ENCODE measurements at regions of chr19 and their contacts with region 1.

Region 1: GRCh38 chr19:45584332-45585157 is at the start of gene OPA3:
- DNase-seq: peak; percentile 98
- H3K4me3 Mint-ChIP-seq: peak within 1 kb of the TSS; percentile 95
- H3K27ac Mint-ChIP-seq: peak within 1 kb of the TSS; percentile 96
- H3K4me1 Mint-ChIP-seq: peaks cover 16% of the 10 kb centered on the region
- H3K27me3 Mint-ChIP-seq: no peaks in the 10 kb centered on the region
- total RNA-seq, gene OPA3: 12.1 and 16.2 TPM in 2 replicates

Region 2: DNA sequence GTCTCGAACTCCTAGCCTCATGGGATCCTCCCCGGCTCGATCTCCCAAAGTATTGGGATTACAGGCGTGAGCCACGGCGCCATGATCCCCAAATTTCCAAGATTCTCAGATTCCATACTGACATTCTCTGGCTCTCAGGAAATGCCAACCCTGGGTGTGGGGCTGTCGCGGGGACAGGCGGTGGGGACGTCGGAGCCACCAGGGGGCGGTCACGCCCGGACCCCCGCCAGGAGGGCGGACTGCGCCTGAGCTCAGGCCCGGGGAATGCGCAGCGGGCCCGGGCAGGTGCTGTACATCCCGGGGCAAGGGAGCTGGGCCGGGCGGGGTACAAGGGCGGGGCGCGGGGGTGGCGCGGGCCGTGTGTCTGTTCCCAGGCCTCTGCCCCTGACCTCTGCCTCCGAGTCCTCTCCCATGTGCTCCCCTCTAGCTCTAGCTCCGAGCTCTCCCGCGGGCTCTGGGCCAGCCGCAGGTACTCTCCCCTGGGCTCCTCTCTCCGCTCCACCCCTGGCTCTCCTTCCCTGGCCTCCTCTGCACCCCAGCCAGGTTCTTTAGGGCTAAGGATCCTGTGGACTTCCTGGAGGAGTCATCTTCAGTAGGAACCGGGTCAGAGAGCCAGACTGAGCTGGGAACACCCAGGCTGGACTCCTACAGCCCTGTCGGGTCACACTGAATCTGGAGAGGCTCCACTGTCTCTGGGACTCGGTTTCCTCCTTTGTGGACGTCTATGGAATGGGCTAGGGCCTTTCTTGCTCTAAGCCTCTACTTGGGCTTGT is 182.1 kb before region 1 on chr19:
- intact Hi-C with region 1: no loop called
- DNase-seq: no peak
- H3K4me3 Mint-ChIP-seq: no peak overlapping the region
- H3K27ac Mint-ChIP-seq: no peak overlapping the region
- H3K4me1 Mint-ChIP-seq: peaks cover 43% of the 10 kb centered on the region
- H3K27me3 Mint-ChIP-seq: peaks cover 22% of the 10 kb centered on the region

Region 3: DNA sequence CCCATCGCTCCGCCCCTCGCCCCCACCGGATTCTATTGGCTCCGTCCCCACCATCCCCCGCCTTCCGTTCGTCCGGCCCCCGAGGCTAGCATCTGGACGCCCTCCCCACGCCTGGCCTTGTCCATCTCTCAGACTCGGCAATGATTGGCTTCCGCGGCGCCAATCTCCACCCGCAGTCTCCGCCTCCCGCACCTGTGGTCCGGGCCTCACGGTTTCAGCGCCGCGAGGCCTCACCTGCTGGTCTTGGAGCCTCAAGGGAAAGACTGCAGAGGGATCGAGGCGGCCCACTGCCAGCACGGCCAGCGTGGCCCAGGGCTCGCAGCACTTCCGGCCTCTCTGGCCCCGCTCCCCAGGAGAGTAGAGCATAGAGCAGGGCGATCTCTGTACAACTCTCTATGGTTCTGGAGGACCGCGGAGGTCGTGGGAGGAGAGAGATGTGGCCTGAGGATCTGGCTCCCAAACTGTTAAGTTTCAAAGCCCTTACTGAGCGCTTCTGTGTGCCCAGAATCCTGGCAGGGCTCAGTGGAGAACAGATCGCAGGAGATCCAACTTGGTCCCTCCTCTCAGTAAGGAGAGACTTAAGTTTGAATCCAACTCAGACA is 160.9 kb before region 1 on chr19 and contains the start of gene ERCC1:
- intact Hi-C with region 1: loop called (anchors 2 kb)
- DNase-seq: peak; percentile 82
- H3K4me3 Mint-ChIP-seq: peak within 1 kb of the TSS; percentile 97
- H3K27ac Mint-ChIP-seq: peak within 1 kb of the TSS; percentile 95
- H3K4me1 Mint-ChIP-seq: peaks cover 50% of the 10 kb centered on the region
- H3K27me3 Mint-ChIP-seq: peaks cover 9% of the 10 kb centered on the region
- total RNA-seq, gene ERCC1: 143 and 152 TPM in 2 replicates

Region 4: DNA sequence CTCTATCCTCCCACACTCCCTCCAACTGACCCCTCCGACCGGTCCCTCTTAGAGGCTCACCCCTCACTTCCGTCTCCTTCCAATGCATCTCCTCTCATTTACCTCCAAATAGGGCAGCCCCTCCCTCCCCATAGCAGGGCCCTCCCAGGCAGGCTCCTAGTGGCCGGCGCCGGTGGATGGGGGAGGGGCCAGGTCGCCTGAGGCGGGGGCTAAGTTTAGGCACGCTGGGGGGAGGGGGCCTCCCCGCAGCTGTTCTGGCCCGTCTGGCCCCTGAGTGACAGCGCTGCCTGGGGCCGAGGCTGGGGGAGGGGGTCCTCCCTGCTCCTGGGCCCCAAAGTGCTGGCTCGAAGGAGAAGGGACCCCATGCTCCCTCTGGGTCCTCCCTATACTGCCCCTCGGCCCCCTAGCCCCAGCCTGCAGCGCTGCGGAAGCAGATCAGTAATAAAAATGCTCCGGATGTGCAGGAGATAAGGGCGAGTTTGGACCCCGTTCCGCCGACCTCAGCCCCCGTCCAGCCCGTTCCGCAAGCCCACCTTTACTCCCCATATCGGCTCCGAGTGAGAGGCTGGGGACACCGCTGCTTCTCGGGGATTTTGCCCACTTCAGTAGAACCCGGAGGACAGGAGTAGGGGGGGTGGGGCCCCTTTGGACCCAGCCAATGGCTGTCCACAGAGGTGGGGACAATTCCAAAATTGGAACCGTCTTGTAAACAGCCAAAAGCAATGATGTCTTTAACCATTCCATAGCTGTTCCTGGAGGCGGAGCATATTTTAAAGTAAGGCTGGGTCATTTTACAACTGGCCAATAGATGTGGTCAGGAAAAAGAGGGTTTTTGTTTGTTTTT is 91.7 kb before region 1 on chr19:
- intact Hi-C with region 1: loop called (anchors 1 kb)
- DNase-seq: no peak
- H3K4me3 Mint-ChIP-seq: peak overlapping the region; percentile 82
- H3K27ac Mint-ChIP-seq: no peak overlapping the region
- H3K4me1 Mint-ChIP-seq: peaks cover 37% of the 10 kb centered on the region
- H3K27me3 Mint-ChIP-seq: peaks cover 25% of the 10 kb centered on the region

Region 5: GRCh38 chr19:45615795-45616708 is 31.5 kb after region 1 on chr19:
- intact Hi-C with region 1: loop called (anchors 1 kb)
- DNase-seq: peak; percentile 66
- H3K4me3 Mint-ChIP-seq: no peak overlapping the region
- H3K27ac Mint-ChIP-seq: peak overlapping the region; percentile 52
- H3K4me1 Mint-ChIP-seq: peaks cover 13% of the 10 kb centered on the region
- H3K27me3 Mint-ChIP-seq: no peaks in the 10 kb centered on the region

Region 6: DNA sequence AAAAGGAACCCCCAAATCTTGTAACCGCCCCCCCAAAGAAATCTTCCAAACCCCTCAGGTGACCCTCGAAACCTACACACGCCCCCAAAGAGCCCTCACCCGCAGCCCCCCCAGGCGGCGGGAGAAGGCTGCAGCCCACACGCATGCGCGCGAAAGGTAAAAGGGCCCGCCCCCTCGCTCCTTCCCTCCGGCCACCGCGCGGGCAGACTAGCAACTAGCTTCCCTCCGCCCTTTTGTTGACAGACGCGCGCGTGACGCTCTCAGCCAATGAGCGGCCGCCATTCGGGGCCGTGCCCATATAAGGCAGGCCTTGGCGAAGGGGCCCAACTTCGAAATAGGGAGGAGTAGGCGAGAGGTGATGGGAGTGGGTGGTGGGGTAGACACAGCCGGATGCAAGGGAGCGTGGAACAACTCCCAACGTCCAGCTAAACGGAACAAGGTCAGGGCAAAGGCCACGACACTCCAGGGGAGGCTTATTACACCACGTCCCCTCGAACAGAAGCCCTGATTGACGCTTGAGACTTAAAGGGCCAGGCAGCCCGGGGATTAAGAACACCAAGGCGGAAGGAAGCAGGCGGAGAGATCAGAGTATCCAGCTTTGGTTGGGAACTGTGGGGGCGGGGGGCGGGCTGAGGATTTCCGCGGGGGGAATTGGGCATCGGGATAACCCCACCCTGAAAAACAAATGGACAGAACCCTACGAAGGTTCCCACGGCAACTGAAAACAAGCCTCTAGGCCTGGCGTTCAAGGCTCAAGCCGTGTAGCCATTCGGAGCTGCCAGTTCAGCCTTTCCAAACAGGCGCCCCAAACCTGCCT is 132.8 kb after region 1 on chr19:
- intact Hi-C with region 1: loop called (anchors 1 kb)
- DNase-seq: peak; percentile 99
- H3K4me3 Mint-ChIP-seq: peak overlapping the region; percentile 96
- H3K27ac Mint-ChIP-seq: peak overlapping the region; percentile 96
- H3K4me1 Mint-ChIP-seq: peaks cover 40% of the 10 kb centered on the region
- H3K27me3 Mint-ChIP-seq: no peaks in the 10 kb centered on the region

Region 7: DNA sequence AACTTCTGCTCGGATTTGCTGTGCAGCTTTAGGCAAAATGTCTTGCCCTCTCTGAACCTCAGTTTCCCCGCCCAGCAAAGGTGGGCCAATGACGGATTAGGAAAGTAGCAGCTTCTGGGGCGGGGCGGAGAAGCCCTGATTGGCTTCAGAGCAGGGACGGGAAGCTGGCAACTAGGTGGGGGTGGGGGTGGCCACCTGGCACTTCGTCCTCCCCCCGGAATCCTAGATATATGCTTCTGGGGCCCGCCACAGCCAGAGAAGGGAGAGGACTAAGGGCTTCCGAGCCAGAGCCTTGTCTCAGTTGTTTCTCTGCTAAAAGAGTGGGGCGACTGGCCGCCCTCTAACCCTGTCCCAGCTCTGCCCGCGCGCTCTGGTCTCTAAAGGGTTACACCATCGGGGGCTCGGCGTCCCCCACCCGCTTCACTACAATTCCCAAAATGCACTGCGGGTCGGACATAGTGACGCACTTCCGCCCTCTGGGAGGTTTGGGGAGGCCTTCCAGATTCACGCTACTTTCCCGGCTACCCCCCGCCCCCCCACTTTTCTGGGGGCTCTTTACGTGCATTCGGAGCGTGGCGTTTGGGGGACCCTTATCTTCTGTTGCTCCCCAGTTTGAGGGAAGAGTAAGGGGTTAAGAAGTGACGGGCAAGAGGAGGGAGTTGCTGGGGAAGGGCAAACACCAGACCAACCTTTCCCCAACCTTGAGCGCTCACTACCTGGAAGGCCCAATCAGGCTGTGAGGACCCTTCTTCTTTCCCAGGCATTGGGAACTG is 302.1 kb after region 1 on chr19:
- intact Hi-C with region 1: loop called (anchors 1 kb)
- DNase-seq: peak; percentile 88
- H3K4me3 Mint-ChIP-seq: peak overlapping the region; percentile 88
- H3K27ac Mint-ChIP-seq: peak overlapping the region; percentile 95
- H3K4me1 Mint-ChIP-seq: peaks cover 13% of the 10 kb centered on the region
- H3K27me3 Mint-ChIP-seq: peaks cover 1% of the 10 kb centered on the region

Measured in activated T-helper 1 cell treated with anti-CD3 and anti-CD28 coated beads, Interleukin-12 subunit alpha, Interleukin-12 subunit beta, Interleukin-2, Interleukin-4 antibody, amounts not matched to agents 30 ng/mL and 10 ng/mL and 1 ng/mL, durations not matched to agents 14 hours and 24 hours and 36 hours (primary cell).